SK-N-SH (cell line): ENCODE measurements at regions of chr2 and their contacts with region 1.

Region 1: DNA sequence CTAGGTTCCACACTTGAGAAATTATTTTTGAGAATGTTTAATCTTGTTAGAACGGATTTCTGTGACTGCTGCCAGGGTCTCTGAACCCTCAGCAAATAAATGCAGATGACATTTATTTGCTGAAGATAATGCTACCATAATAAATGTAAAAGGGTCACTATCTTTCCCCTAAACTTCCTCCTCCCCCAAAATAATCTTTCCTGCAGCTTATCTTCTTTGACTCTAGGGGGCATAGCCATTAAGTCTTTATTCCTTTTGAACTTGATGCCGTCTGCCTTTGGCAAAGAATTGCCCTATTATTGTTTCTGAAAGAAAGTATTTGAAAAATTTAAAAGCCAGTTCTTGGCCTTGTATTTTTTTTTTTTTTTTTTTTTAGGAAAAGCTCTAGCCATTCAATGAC is 63.6 kb upstream of the ACSL3 start:
- DNase-seq: peak; percentile 43
- H3K4me3 ChIP-seq: no peak overlapping the region; a peak in 1 of 4 replicates
- H3K27ac ChIP-seq: no peak overlapping the region
- H3K4me1 ChIP-seq: peaks cover 0 to 5% of the 10 kb centered on the region in 2 experiments; a peak in 3 of 4 replicates
- H3K27me3 ChIP-seq: no peaks in the 10 kb centered on the region
- CTCF ChIP-seq: peak; percentile 65
- EP300 ChIP-seq: no peak
- RAD21 ChIP-seq: peak; percentile 57

Region 2: DNA sequence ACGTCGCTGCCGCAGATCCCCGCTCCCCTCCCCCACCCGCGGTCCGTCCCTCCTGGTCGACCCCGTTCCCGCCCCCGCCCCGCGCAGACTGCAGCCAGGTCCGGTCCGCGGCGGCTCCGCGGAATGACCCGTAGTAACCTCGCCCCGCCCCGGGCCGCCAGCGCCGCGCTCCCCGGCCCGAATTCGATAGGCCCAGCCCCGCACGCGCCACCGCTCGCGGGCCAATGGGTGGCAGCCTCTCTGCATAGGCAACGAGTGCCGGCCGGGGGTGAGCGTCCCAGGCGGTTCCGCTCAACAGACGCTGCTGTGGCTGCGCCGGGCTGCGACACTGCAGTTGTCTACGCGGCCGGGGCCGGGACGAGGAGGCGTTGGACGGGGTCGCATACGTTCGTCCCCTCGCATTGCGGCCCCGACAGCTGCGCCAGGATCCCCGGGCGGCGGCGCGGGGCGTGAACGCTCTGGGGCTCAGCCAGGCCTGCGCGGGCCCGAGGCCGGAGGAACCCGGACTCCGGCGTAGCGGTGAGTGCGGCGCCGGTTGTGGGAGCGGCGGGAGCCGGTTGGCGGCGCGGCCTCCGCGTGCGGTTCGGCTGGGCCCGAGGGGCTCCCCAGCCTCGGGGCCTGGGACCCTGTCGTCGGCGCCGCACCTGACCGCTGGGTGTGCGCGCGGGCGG is 63.6 kb after region 1 on chr2 and contains the start of gene ACSL3:
- CTCF ChIA-PET with region 1: interaction called, 12 read pairs
- POLR2A ChIA-PET with region 1: no interaction called
- DNase-seq: peak; percentile 97
- H3K4me3 ChIP-seq: peak within 1 kb of the TSS; percentile 69 to 95
- H3K27ac ChIP-seq: peak within 1 kb of the TSS; percentile 68 to 95
- H3K4me1 ChIP-seq: peaks cover 25 to 30% of the 10 kb centered on the region in 2 experiments
- H3K27me3 ChIP-seq: no peaks in the 10 kb centered on the region
- CTCF ChIP-seq: no peak; the same call in 1 of the 2 replicates
- EP300 ChIP-seq: peak in 1 of 2 experiments; percentile 31; a peak in 1 of 4 replicates
- RAD21 ChIP-seq: no peak; the same call in 1 of the 2 replicates
- polyA plus RNA-seq, gene ACSL3: 15.7 and 25.2 TPM in 2 replicates

Region 3: GRCh38 chr2:222993920-222994650 is 196.8 kb after region 1 on chr2:
- CTCF ChIA-PET with region 1: no interaction called
- POLR2A ChIA-PET with region 1: no interaction called
- DNase-seq: peak; percentile 47
- H3K4me3 ChIP-seq: peak overlapping the region; percentile 6 to 14; a peak in 2 of 4 replicates
- H3K27ac ChIP-seq: peak overlapping the region; percentile 98 to 99
- H3K4me1 ChIP-seq: peaks cover 22% of the 10 kb centered on the region in 2 experiments
- H3K27me3 ChIP-seq: no peaks in the 10 kb centered on the region
- CTCF ChIP-seq: no peak
- EP300 ChIP-seq: peak; percentile 57 to 81
- RAD21 ChIP-seq: peak; percentile 32; the same call in 1 of the 2 replicates

Region 4: DNA sequence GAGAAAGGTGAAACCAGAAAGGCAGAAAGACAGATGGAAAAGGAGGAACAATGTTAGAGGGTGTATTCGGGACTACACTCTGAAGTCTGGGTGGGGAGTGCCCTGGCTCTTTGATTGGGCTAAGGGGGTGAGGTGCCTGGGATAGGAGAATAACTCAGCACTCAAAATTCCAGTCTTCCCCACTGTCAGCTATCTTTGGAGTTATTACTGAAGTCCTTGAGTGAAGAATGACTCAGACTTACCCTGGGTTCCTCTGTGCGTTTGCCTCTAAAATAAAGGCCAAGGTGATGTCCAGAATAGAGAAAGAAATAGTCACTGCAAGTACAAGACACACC is 1393.6 kb after region 1 on chr2:
- CTCF ChIA-PET with region 1: no interaction called
- POLR2A ChIA-PET with region 1: no interaction called
- DNase-seq: no peak
- H3K4me3 ChIP-seq: no peak overlapping the region
- H3K27ac ChIP-seq: peak overlapping the region in 1 of 2 experiments; percentile 72; a peak in 3 of 4 replicates
- H3K4me1 ChIP-seq: peaks cover 0 to 3% of the 10 kb centered on the region in 2 experiments; a peak in 1 of 4 replicates
- H3K27me3 ChIP-seq: no peaks in the 10 kb centered on the region
- CTCF ChIP-seq: no peak
- EP300 ChIP-seq: no peak
- RAD21 ChIP-seq: no peak